ENCODE measurements at regions of chr12 and their contacts with region 1.

Region 1: GRCh38 chr12:110957652-110958051 is 37.3 kb upstream of the MYL2 start:
- DNase-seq: no peak
- H3K4me3 ChIP-seq: no peak overlapping the region
- H3K27ac ChIP-seq: no peak overlapping the region
- H3K4me1 ChIP-seq: no peaks in the 10 kb centered on the region
- H3K27me3 ChIP-seq: peaks cover 89% of the 10 kb centered on the region
- CTCF ChIP-seq: no peak

Region 2: GRCh38 chr12:110874781-110875180 is 82.9 kb before region 1 on chr12:
- CTCF ChIA-PET with region 1: no interaction called
- POLR2A ChIA-PET with region 1: no interaction called
- intact Hi-C with region 1: no loop called
- DNase-seq: no peak
- H3K4me3 ChIP-seq: no peak overlapping the region
- H3K27ac ChIP-seq: no peak overlapping the region
- H3K4me1 ChIP-seq: no peaks in the 10 kb centered on the region
- H3K27me3 ChIP-seq: peaks cover 27% of the 10 kb centered on the region; the same call in 1 of the 2 replicates
- CTCF ChIP-seq: no peak

Region 3: GRCh38 chr12:110972866-110973265 is 15.2 kb after region 1 on chr12:
- CTCF ChIA-PET with region 1: no interaction called
- POLR2A ChIA-PET with region 1: no interaction called
- intact Hi-C with region 1: no loop called
- DNase-seq: no peak
- H3K4me3 ChIP-seq: no peak overlapping the region
- H3K27ac ChIP-seq: no peak overlapping the region
- H3K4me1 ChIP-seq: no peaks in the 10 kb centered on the region
- H3K27me3 ChIP-seq: peaks cover 58% of the 10 kb centered on the region
- CTCF ChIP-seq: no peak

Region 4: DNA sequence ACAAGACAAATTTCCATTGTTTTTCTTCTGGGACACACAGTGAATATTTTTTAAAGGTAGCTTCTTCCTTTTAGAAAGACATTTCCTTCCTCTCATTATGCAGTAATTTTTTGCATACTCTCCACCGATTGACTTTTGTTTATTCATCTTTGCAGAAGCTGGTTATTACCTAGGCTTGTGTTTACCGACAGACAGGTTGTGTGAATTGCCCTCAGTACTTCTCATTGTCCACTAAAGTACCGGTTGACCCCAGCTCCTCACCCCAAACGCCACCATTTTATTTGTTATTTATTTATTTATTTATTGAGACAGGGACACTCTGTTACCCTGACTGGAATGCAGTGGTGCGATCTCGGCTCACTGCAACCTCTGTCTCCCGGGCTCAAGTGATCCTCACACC is 26.2 kb after region 1 on chr12:
- CTCF ChIA-PET with region 1: no interaction called
- POLR2A ChIA-PET with region 1: interaction called, 22 read pairs
- intact Hi-C with region 1: no loop called
- DNase-seq: no peak
- H3K4me3 ChIP-seq: no peak overlapping the region
- H3K27ac ChIP-seq: no peak overlapping the region
- H3K4me1 ChIP-seq: no peaks in the 10 kb centered on the region
- H3K27me3 ChIP-seq: peaks cover 91% of the 10 kb centered on the region
- CTCF ChIP-seq: no peak

Region 5: DNA sequence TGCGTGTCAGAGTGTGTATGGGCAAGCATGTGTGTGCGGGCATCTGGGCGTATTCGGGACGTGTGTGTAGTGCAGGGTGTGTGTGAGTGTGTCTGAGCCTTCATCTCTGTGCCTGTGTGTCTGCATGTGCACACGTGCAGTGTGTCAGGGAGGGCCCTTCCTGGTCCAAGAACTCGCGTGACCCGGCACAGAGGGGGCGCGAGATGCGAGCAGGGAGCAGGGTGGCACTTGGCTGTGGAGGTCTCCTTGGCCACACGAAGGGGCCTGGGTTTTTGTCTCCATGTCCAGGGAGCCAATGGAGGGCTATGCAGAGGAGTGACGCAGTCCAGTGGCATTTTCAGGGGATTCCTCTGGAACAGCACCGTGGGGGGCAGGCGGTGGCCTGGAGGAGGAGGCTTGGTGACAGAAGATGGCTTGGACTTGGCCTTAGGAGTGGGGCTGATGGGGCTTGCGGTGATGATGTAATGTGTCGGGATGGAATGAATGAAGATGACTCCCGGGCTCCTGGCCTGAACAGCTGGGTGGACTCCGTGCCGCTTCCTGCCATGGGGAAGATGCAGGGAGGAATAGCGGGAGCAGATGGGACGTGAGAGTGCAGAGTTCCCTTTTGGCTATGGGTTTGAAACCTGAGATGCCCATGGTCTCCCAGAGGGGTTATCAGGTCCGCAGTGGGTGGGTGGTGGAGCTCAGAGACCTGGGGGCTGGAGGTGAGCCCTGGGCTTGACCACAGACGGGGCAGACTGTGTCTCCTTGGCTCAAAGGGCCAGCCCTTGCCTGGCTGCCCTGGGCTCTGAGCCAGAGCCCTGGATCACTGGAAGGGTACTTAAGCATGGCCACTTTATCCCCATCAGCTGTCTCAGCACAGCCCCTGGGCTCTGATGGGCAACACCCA is 202.9 kb after region 1 on chr12:
- CTCF ChIA-PET with region 1: no interaction called
- POLR2A ChIA-PET with region 1: no interaction called
- intact Hi-C with region 1: no loop called
- DNase-seq: no peak
- H3K4me3 ChIP-seq: no peak overlapping the region
- H3K27ac ChIP-seq: no peak overlapping the region
- H3K4me1 ChIP-seq: no peaks in the 10 kb centered on the region
- H3K27me3 ChIP-seq: peaks cover 92% of the 10 kb centered on the region
- CTCF ChIP-seq: no peak

Measured in PC-9 (cell line).